ENCODE measurements at regions of chr2 and their contacts with region 1.

Region 1: DNA sequence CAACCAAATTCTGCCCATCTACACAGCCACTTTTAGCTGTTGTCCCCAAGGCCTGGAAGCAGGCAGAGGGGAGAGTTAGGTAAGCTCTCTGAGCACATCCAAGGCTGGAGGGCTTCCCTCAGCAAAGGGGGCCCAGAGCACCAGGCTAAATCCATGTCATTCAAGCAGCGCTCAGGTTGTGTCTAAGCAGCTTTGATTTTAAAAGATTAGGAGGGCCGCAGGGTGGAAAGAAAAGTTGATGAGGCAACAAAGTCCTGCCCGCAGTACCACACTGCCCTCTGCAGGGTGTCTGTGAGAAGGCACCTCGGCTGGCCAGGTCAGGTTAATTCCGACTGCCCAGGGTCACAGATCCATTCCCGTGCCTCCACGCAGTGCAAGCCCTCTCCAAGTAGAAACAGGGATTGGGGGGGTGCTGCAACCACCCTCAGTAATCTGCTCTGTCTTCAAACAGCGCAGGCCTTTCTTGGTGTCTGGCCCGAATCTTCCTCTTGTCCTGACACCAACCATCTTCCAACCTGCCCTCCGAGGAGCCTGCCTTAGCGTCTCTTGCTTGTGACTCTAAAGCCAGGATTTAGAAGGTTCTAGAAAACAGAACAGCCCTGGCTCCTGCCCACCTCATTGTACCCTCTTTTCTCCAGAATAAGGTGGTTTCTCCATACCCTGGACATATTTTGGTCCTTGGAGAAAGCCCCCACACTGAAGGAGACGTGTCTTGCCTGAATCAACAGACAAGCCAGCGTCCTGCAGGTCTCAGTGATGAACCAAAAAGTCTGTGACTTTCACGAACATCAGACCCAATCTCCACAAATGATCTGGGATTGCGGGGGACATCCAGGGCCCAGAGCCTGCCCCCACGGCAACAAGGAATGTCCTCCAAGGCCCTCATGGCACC is 289.2 kb downstream of the TNS1 start:
- DNase-seq: peak; percentile 81 to 96
- H3K4me3 ChIP-seq: no peak overlapping the region
- CTCF ChIP-seq: peak in 1 of 3 donors; percentile 93
- POLR2A ChIP-seq: no peak

Region 2: DNA sequence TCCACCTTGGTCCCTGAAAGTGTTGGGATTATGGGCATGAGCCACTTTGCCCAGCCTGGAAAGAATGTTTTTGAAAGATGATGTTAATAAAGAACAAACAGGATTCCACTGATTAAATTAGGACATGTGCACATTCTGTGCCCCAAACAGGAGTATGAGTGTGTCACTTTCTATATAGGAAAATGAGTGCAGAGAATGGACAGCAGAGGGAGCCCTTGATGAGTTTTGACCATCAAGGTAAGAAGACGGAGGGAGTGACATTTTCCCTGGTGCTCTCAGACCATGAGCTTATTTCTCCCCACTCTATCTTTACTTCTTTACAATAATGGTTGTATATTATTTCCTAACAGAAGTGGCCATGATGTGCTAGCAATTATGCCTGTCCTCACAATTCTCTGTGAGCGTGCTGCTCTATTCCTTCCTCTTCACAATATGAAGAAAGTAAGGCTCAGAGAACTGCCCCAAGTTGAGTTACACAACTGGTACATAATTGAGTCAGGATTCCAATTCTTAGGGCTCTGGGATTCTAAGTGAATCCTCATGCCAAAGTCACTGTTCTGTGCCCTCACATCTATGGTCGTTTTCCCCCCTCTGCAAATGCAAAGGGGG is 1194.4 kb before region 1 on chr2:
- intact Hi-C with region 1: loop called (anchors 5 kb)
- DNase-seq: peak; percentile 80 to 87
- H3K4me3 ChIP-seq: no peak overlapping the region
- CTCF ChIP-seq: peak in 1 of 3 donors; percentile 67
- POLR2A ChIP-seq: no peak

Region 3: GRCh38 chr2:216698895-216699294 is 1014.7 kb before region 1 on chr2:
- intact Hi-C with region 1: loop called (anchors 10 kb)
- DNase-seq: no peak
- H3K4me3 ChIP-seq: no peak overlapping the region
- CTCF ChIP-seq: no peak
- POLR2A ChIP-seq: no peak

Region 4: DNA sequence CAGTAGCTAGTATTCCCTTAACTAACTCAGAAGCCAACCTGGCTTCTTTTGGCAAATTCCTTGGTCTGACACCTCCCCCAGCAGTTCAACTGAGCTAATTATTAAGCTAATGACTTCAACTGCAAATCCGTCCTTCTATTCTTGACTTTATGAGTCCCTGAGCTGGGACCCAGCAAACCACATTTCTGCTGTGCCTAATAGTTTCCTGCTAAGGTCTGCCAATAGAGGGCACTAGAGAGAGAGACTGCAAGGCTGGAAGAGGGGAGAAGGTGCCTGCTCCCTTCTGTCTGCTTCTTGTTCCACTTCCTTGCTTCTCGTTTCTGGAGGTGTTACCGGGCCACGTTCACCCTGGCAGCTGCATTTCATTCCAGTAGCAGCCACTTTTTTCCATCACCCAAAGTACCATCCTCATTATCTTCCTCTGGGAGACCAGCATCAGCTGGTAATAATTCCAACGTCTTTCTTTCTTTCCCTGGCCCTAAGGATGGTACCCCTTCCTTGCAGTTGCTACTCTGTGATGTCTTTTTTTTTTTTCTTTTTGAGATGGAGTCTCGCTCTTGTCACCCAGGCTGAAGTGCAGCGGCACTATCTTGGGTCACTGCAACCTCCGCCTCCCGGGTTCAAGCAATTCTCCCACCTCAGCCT is 62.8 kb before region 1 on chr2:
- intact Hi-C with region 1: loop called (anchors 5 kb)
- DNase-seq: peak in 1 of 2 donors; percentile 32
- H3K4me3 ChIP-seq: no peak overlapping the region
- CTCF ChIP-seq: no peak
- POLR2A ChIP-seq: no peak

Region 5: DNA sequence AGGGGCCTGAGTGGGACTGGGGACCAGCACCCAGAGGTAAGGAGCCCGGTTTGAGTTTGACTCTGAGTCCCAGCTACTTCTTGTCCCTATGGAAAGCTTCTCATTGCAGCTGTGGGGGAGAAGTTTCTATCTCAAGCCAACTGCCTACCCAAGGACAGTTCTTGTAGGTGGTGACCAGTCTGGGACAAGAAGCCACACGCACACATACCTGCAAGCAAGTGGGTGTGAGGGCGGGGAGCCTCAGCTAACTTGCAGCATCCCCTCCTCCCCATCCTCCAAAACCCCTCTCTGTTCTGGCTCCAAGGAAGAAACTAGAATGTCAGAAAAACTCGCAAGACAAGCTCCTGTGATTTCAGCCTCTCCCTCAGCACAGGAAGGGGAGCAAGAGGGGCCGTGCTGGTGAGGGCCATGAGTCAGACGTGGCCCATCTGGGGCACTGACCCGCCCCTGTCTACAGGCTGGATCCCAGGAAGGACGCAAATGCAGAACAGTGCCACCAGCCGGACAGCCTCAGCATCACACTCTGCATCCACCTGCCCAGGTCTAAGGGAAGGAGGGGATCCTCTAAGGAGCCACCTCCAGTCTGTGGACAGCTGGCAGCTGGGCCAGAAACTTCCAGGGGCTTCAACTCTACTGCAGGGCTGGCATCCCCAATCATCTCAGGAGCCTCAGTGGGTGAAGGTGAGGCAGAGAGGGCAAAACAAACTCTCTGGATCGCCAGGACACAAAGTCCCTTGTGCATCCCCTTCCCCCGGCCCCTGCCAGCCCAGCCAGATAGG is 185.8 kb after region 1 on chr2:
- intact Hi-C with region 1: no loop called
- DNase-seq: peak; percentile 71 to 96
- H3K4me3 ChIP-seq: no peak overlapping the region
- CTCF ChIP-seq: peak in 1 of 3 donors; percentile 61
- POLR2A ChIP-seq: no peak

Measured in lower leg skin (tissue), 4 donors.